HEK293T (cell line): ENCODE measurements at regions of chr5 and their contacts with region 1.

Region 1: GRCh38 chr5:154421868-154422267 is 23.9 kb upstream of the SAP30L start:
- DNase-seq: peak; percentile 57

Region 2: GRCh38 chr5:154461531-154461930 is 39.7 kb after region 1 on chr5:
- CTCF ChIA-PET with region 1: interaction called, 14 read pairs
- POLR2A ChIA-PET with region 1: no interaction called
- DNase-seq: no peak